Posterior cingulate gyrus (tissue), 11 donors: ENCODE measurements at regions of chr18 and their contacts with region 1.

Region 1: GRCh38 chr18:8480506-8481328 is 128.5 kb upstream of the RAB12 start:
- DNase-seq: peak in 8 of 10 donors; percentile 35 to 88 (median 57)

Region 2: GRCh38 chr18:6482198-6482977 is 1998.3 kb before region 1 on chr18:
- intact Hi-C with region 1: no loop called
- DNase-seq: peak in 6 of 10 donors; percentile 22 to 90 (median 52)

Region 3: GRCh38 chr18:7272311-7273049 is 1208.2 kb before region 1 on chr18:
- intact Hi-C with region 1: loop called (anchors 2 kb)
- DNase-seq: peak; percentile 47 to 93 (median 73)

Region 4: GRCh38 chr18:7974200-7974874 is 506.4 kb before region 1 on chr18:
- intact Hi-C with region 1: no loop called
- DNase-seq: no peak